ENCODE measurements at regions of chr1 and their contacts with region 1.

Region 1: GRCh38 chr1:75470448-75470847 is 140.5 kb downstream of the SLC44A5 start:
- DNase-seq: no peak
- H3K4me3 ChIP-seq: no peak overlapping the region
- H3K27ac ChIP-seq: no peak overlapping the region
- H3K4me1 ChIP-seq: peaks cover 20% of the 10 kb centered on the region
- H3K27me3 ChIP-seq: peaks cover 18% of the 10 kb centered on the region
- CTCF ChIP-seq: no peak

Region 2: DNA sequence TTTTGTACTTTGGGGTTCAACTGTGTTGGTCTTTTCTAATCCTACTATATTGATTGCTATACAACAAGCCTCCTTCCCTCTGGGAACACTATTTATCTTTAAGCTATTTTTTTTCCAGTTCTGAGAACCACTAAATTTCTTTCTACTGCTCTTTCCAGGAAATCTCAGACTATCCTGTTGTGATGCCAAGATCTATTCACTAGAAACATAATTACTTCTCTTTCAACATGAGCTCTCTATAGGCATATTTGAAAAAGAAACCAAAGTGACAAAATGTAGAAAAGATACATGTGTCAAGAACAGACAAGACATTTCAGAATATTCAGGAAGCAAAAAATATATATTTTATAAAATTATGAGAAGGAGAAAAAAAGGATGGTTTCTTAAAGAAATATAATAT is 57.6 kb after region 1 on chr1:
- CTCF ChIA-PET with region 1: no interaction called
- POLR2A ChIA-PET with region 1: interaction called, 22 read pairs
- intact Hi-C with region 1: no loop called
- DNase-seq: no peak
- H3K4me3 ChIP-seq: no peak overlapping the region
- H3K27ac ChIP-seq: no peak overlapping the region
- H3K4me1 ChIP-seq: no peaks in the 10 kb centered on the region
- H3K27me3 ChIP-seq: no peaks in the 10 kb centered on the region
- CTCF ChIP-seq: no peak

Region 3: GRCh38 chr1:75838079-75838478 is 367.6 kb after region 1 on chr1:
- CTCF ChIA-PET with region 1: no interaction called
- POLR2A ChIA-PET with region 1: no interaction called
- intact Hi-C with region 1: no loop called
- DNase-seq: no peak
- H3K4me3 ChIP-seq: no peak overlapping the region
- H3K27ac ChIP-seq: no peak overlapping the region
- H3K4me1 ChIP-seq: peaks cover 13% of the 10 kb centered on the region
- H3K27me3 ChIP-seq: no peaks in the 10 kb centered on the region
- CTCF ChIP-seq: no peak